Activated T-helper 1 cell treated with anti-CD3 and anti-CD28 coated beads, Interleukin-12 subunit alpha, Interleukin-12 subunit beta, Interleukin-2, Interleukin-4 antibody, amounts not matched to agents 30 ng/mL and 10 ng/mL and 1 ng/mL, durations not matched to agents 14 hours and 24 hours and 36 hours (primary cell): ENCODE measurements at regions of chr19 and their contacts with region 1.

Region 1: GRCh38 chr19:30682999-30683536 is 310.9 kb downstream of the ZNF536 start:
- DNase-seq: no peak
- H3K4me3 Mint-ChIP-seq: no peak overlapping the region
- H3K27ac Mint-ChIP-seq: no peak overlapping the region
- H3K4me1 Mint-ChIP-seq: no peaks in the 10 kb centered on the region
- H3K27me3 Mint-ChIP-seq: peaks cover 11% of the 10 kb centered on the region

Region 2: DNA sequence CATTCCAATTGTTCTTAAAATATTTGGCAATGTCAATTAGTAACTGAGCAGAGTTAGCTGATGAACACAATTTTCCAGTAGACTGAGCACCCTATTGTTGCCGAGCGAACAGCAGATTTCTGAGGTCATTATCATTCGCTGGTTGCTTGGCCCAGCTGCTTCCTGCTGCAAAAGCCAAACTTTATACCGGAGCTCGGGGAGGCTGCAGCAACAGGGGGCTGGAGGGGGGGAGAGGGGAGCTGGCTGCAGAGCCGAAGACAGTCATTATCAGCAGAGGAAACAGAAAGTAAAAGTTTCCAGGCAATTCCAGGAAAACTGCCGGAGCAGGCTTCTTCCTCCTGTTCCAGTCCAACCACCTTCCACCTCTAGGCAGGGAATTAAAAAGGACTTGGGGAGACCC is 233.0 kb before region 1 on chr19:
- intact Hi-C with region 1: no loop called
- DNase-seq: no peak
- H3K4me3 Mint-ChIP-seq: no peak overlapping the region
- H3K27ac Mint-ChIP-seq: no peak overlapping the region
- H3K4me1 Mint-ChIP-seq: no peaks in the 10 kb centered on the region
- H3K27me3 Mint-ChIP-seq: peaks cover 1% of the 10 kb centered on the region

Region 3: GRCh38 chr19:30498707-30499106 is 184.4 kb before region 1 on chr19:
- intact Hi-C with region 1: no loop called
- DNase-seq: no peak
- H3K4me3 Mint-ChIP-seq: no peak overlapping the region
- H3K27ac Mint-ChIP-seq: no peak overlapping the region
- H3K4me1 Mint-ChIP-seq: no peaks in the 10 kb centered on the region
- H3K27me3 Mint-ChIP-seq: peaks cover 3% of the 10 kb centered on the region

Region 4: GRCh38 chr19:30955112-30956104 is 272.3 kb after region 1 on chr19:
- intact Hi-C with region 1: loop called (anchors 5 kb)
- DNase-seq: no peak
- H3K4me3 Mint-ChIP-seq: no peak overlapping the region
- H3K27ac Mint-ChIP-seq: no peak overlapping the region
- H3K4me1 Mint-ChIP-seq: no peaks in the 10 kb centered on the region
- H3K27me3 Mint-ChIP-seq: peaks cover 3% of the 10 kb centered on the region

Region 5: GRCh38 chr19:32041681-32042292 is 1358.7 kb after region 1 on chr19:
- intact Hi-C with region 1: loop called (anchors 5 kb)
- DNase-seq: no peak
- H3K4me3 Mint-ChIP-seq: no peak overlapping the region
- H3K27ac Mint-ChIP-seq: no peak overlapping the region
- H3K4me1 Mint-ChIP-seq: no peaks in the 10 kb centered on the region
- H3K27me3 Mint-ChIP-seq: peaks cover 23% of the 10 kb centered on the region